K562 (cell line): ENCODE measurements at regions of chr7 and their contacts with region 1.

Region 1: GRCh38 chr7:134943764-134944400 is 42.4 kb upstream of the AGBL3 start:
- DNase-seq: peak in 2 of 4 experiments; percentile 44 to 51
- ATAC-seq: peak; percentile 89
- H3K4me3 ChIP-seq: no peak overlapping the region
- H3K27ac ChIP-seq: no peak overlapping the region
- H3K4me1 ChIP-seq: no peaks in the 10 kb centered on the region; a peak in 1 of 5 replicates
- H3K27me3 ChIP-seq: peaks cover 18 to 26% of the 10 kb centered on the region in 2 experiments; a peak in 4 of 5 replicates
- CTCF ChIP-seq: peak; percentile 52 to 75 (median 64); a peak in 5 of 6 replicates
- EP300 ChIP-seq: no peak
- POLR2A ChIP-seq: no peak
- RAD21 ChIP-seq: peak; percentile 87

Region 2: DNA sequence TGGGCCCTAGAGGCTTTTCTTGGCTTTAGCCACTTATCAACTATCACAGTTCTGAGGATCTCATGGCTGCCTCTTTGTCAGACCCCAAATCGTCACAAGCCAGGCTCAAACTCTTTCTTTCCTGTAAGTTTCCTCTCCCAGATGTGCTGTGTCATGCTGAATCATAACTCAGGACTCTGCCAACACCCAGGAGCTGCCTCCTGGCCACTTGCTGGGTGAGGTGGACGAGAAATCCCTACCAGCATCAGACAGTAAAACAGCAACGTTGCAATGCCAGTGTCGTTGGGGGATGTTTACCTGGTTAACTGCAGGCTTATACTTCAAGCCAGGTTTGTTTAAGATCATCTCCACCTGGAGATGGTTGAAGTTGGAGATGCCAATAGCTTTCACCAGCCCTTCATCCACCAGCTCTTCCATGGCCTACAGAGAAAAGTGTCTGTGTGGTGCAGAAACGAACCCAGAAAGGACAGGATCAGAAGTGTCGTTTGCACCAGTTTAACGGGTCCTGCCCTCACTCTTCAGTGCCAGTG is 495.1 kb before region 1 on chr7:
- CTCF ChIA-PET with region 1: no interaction called
- POLR2A ChIA-PET with region 1: no interaction called
- in situ Hi-C with region 1: loop called (anchors 10 kb)
- intact Hi-C with region 1: no loop called
- DNase-seq: peak; percentile 79 to 88 (median 84)
- ATAC-seq: peak; percentile 83
- H3K4me3 ChIP-seq: no peak overlapping the region
- H3K27ac ChIP-seq: peak overlapping the region; percentile 50
- H3K4me1 ChIP-seq: peaks cover 18 to 26% of the 10 kb centered on the region in 2 experiments
- H3K27me3 ChIP-seq: peaks cover 7 to 32% of the 10 kb centered on the region in 2 experiments; a peak in 4 of 5 replicates
- CTCF ChIP-seq: no peak
- EP300 ChIP-seq: peak; percentile 82
- POLR2A ChIP-seq: no peak
- RAD21 ChIP-seq: 0 out of 4 replicates have a peak, but pooled peaks of 1 of the 2 experiments have one; percentile 9

Region 3: DNA sequence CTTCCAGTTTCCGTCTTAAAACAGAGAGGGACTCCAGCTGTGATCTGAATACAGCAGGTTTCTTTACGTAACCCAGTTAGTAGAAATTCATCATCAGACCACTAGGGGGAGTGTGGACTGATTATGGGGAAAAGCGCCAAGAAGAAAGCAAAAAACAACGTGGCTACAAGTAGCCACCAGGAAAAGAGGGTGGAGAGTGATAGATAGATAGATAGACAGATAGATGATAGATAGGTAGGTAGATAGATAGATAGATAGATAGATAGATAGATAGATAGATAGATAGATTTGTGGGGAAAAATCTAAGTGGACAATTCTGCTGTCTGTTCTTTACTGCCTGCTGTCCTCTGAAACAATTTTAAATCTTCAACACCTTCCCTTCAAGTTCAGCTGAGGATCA is 429.2 kb before region 1 on chr7:
- CTCF ChIA-PET with region 1: no interaction called
- POLR2A ChIA-PET with region 1: no interaction called
- in situ Hi-C with region 1: no loop called
- intact Hi-C with region 1: loop called (anchors 10 kb)
- DNase-seq: peak; percentile 76 to 82 (median 81)
- ATAC-seq: peak; percentile 86
- H3K4me3 ChIP-seq: no peak overlapping the region
- H3K27ac ChIP-seq: no peak overlapping the region
- H3K4me1 ChIP-seq: no peaks in the 10 kb centered on the region
- H3K27me3 ChIP-seq: peaks cover 4 to 24% of the 10 kb centered on the region in 2 experiments; a peak in 4 of 5 replicates
- CTCF ChIP-seq: peak; percentile 84 to 88 (median 84)
- EP300 ChIP-seq: no peak
- POLR2A ChIP-seq: no peak
- RAD21 ChIP-seq: peak; percentile 54 to 64

Region 4: DNA sequence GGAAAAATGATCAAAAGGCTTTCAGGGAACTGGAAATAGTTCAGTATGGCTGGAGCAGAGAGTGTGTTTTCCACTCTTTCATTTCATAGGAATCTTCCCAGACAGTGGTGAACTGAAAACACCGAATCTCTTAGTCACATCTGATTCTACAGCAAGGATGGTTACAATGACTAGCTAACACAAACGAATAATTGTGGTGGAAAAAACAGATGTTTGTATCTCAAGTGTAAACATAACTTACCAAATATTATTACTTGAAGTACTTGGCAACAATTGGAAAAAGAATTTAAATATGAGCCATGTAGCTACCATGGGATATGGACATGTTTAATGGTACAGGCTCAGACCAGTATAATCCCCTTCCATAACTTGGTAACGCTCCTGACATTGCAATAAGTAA is 318.3 kb before region 1 on chr7:
- CTCF ChIA-PET with region 1: no interaction called
- POLR2A ChIA-PET with region 1: no interaction called
- in situ Hi-C with region 1: loop called (anchors 5 kb)
- intact Hi-C with region 1: no loop called
- DNase-seq: no peak
- ATAC-seq: no peak
- H3K4me3 ChIP-seq: no peak overlapping the region
- H3K27ac ChIP-seq: no peak overlapping the region
- H3K4me1 ChIP-seq: no peaks in the 10 kb centered on the region
- H3K27me3 ChIP-seq: peaks cover 0 to 9% of the 10 kb centered on the region in 2 experiments; a peak in 1 of 5 replicates
- CTCF ChIP-seq: no peak
- EP300 ChIP-seq: no peak
- POLR2A ChIP-seq: no peak
- RAD21 ChIP-seq: no peak

Region 5: GRCh38 chr7:134690016-134690415 is 253.9 kb before region 1 on chr7:
- CTCF ChIA-PET with region 1: interaction called, 10 read pairs
- POLR2A ChIA-PET with region 1: no interaction called
- in situ Hi-C with region 1: no loop called
- intact Hi-C with region 1: loop called (anchors 2 kb)
- DNase-seq: no peak
- ATAC-seq: peak; percentile 59
- H3K4me3 ChIP-seq: no peak overlapping the region
- H3K27ac ChIP-seq: no peak overlapping the region
- H3K4me1 ChIP-seq: no peaks in the 10 kb centered on the region
- H3K27me3 ChIP-seq: peaks cover 40 to 45% of the 10 kb centered on the region in 2 experiments
- CTCF ChIP-seq: peak; percentile 10 to 42 (median 31); a peak in 3 of 6 replicates
- EP300 ChIP-seq: no peak
- POLR2A ChIP-seq: no peak
- RAD21 ChIP-seq: peak; percentile 46 to 54

Region 6: DNA sequence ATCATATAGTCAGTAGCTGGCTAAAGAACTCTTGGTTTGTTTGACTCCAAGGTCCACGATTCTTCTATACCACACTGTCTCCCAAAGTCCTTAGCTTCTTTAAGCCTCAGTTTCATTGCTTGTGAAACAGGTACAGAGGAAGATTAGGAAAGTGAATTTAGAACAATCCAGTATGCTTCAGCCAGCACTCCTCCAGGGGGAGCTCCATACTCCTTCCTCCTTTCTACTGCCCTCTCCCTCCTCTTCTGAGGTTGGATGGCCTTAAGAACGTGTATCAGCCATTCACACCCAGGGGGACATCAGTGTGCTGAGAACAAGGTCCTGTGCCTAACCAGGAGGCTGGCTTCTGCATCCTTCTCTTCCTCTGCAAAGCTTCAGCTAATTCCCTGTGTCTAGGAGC is 219.3 kb before region 1 on chr7:
- CTCF ChIA-PET with region 1: no interaction called
- POLR2A ChIA-PET with region 1: no interaction called
- in situ Hi-C with region 1: no loop called
- intact Hi-C with region 1: loop called (anchors 5 kb)
- DNase-seq: peak in 2 of 4 experiments; percentile 47 to 55
- ATAC-seq: peak; percentile 92
- H3K4me3 ChIP-seq: no peak overlapping the region
- H3K27ac ChIP-seq: no peak overlapping the region
- H3K4me1 ChIP-seq: no peaks in the 10 kb centered on the region
- H3K27me3 ChIP-seq: peaks cover 14 to 16% of the 10 kb centered on the region in 2 experiments; a peak in 4 of 5 replicates
- CTCF ChIP-seq: peak; percentile 58 to 67 (median 67)
- EP300 ChIP-seq: no peak
- POLR2A ChIP-seq: no peak
- RAD21 ChIP-seq: peak; percentile 26 to 58; a peak in 3 of 4 replicates

Region 7: DNA sequence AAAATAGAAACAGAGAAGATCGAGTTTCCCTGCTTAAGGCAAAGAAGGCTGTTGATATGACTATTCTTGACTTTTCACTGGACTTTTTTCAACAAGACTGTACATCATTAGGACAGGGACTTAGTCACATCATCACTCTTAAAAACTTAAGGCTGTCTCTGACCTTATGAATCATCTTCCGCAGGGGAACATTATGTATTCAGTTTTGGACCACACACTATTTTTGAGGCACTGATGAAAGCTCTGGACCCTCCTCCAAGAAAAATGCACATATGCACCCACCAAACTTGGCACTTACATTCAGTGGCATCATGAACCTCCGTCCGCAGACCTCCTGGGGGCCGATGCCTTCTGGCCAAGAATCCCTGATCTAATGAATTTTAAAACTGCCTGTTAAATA is 68.0 kb before region 1 on chr7:
- CTCF ChIA-PET with region 1: no interaction called
- POLR2A ChIA-PET with region 1: no interaction called
- in situ Hi-C with region 1: no loop called
- intact Hi-C with region 1: loop called (anchors 5 kb)
- DNase-seq: no peak
- ATAC-seq: no peak
- H3K4me3 ChIP-seq: no peak overlapping the region
- H3K27ac ChIP-seq: no peak overlapping the region
- H3K4me1 ChIP-seq: no peaks in the 10 kb centered on the region
- H3K27me3 ChIP-seq: peaks cover 13 to 23% of the 10 kb centered on the region in 2 experiments; a peak in 4 of 5 replicates
- CTCF ChIP-seq: no peak
- EP300 ChIP-seq: no peak
- POLR2A ChIP-seq: no peak
- RAD21 ChIP-seq: no peak